ENCODE measurements at regions of chr10 and their contacts with region 1.

Region 1: DNA sequence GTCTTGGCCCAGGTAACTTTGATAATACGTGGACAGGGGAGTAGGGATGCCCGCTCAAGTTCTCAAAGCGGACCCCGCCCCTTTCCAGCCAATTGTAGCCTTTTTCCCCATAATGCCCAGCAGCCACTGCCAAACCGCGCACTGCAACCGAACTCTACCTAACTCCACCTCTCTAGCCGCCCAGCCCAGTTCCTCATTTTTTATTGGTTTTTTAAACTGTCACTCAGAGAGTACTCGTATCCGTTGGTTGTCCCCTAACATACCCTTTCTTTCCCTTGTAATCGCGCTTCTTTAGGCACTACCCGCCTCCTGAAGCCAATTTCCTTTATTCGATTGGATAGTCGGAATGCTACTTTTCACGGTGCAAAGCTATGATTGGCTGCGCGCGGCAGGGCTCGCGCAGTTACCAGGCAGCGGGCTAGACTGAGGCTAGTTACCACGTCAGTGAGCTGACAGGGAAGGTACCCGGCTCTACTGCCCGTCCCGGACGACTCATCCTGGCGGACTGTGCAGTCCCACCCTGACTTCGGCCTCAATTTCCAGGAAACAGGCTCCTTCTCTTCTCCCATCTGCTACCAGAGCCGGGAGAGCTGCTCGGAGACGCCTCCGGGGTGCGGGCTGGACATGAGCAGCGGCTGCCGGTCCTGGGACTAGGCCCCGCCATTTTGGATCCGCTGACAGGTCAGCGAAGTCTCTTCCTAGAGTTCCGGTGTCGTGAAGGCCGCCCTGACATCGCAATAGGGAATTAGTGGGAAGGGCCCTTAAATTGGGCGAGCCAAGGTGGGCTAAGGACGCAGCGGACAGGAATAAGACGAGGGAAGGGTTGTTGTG is at the start of gene GBF1:
- DNase-seq: peak; percentile 89 to 94
- ATAC-seq: peak; percentile 81 to 87 (median 84)
- H3K4me3 ChIP-seq: peak within 1 kb of the TSS; percentile 89
- H3K27ac ChIP-seq: peak within 1 kb of the TSS; percentile 86
- H3K4me1 ChIP-seq: peaks cover 63% of the 10 kb centered on the region
- H3K27me3 ChIP-seq: no peaks in the 10 kb centered on the region
- CTCF ChIP-seq: no peak
- total RNA-seq, gene GBF1: 40.8 to 47.1 (median 44.2) TPM

Region 2: GRCh38 chr10:101716851-101717659 is 528.3 kb before region 1 on chr10:
- intact Hi-C with region 1: no loop called
- DNase-seq: no peak
- ATAC-seq: no peak
- H3K4me3 ChIP-seq: no peak overlapping the region
- H3K27ac ChIP-seq: no peak overlapping the region
- H3K4me1 ChIP-seq: no peaks in the 10 kb centered on the region
- H3K27me3 ChIP-seq: no peaks in the 10 kb centered on the region
- CTCF ChIP-seq: no peak

Region 3: DNA sequence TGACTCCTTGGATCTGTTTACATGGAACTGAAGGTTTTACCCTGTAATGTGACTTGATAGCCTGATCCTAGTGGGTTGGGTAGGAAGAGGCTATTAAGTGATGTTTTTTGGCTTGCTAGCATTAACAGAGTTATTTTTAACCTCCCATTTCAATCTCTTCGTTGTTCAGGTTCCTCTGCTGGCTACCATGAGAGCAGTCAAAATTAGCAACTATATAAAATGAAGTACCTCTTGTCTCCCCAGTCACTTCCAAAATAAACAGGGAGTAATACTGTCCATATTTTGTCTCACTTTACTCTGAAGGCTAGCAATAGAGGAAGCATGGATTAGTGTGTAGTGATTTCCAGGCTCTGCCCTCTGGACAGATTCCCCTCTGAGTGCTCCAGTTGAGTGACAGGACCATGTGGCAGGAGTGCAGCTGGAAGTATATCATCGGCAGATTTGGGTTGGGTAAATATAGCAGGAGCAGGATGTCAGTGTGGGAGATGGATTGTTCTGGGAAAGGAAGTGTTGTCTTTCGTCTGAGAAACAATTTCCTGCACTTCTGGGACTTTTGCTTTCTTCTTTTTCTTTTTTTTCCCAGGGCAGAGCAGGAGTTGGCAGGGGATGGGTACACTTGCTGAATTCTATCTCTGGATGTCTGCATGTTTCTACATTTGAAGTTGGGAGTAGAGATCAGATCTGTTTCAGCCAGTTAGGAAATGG is 35.2 kb after region 1 on chr10:
- intact Hi-C with region 1: loop called in 1 of 2 experiments (anchors 5 kb)
- DNase-seq: peak; percentile 73 to 85
- ATAC-seq: peak; percentile 96 to 98 (median 98)
- H3K4me3 ChIP-seq: peak overlapping the region; percentile 56
- H3K27ac ChIP-seq: peak overlapping the region; percentile 94
- H3K4me1 ChIP-seq: peaks cover 68% of the 10 kb centered on the region
- H3K27me3 ChIP-seq: no peaks in the 10 kb centered on the region
- CTCF ChIP-seq: no peak

Region 4: DNA sequence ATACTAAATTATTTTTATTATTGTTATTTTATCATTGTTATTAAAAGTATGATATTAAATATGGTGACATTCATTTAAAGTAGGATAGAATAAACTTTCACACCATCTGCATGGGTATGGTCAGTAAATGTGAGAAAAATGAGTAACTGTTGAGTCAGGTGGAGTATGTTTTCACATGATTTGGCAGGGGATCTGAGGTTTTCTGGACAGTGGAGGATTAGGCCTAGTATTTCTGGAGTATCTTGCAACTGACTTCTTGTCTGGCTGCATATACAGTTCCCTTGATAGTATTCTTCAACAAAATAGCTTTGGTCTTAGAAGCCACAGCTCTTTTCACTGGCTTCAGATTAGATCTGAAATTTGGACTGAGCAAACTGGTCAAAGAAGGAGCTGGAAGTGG is 54.6 kb after region 1 on chr10:
- intact Hi-C with region 1: loop called in 1 of 2 experiments (anchors 10 kb)
- DNase-seq: no peak
- ATAC-seq: peak; percentile 69 to 84 (median 80)
- H3K4me3 ChIP-seq: peak overlapping the region; percentile 31
- H3K27ac ChIP-seq: peak overlapping the region; percentile 83
- H3K4me1 ChIP-seq: peaks cover 36% of the 10 kb centered on the region
- H3K27me3 ChIP-seq: no peaks in the 10 kb centered on the region
- CTCF ChIP-seq: no peak